A673 (cell line): ENCODE measurements at regions of chr11 and their contacts with region 1.

Region 1: GRCh38 chr11:122600290-122600689 is 55.2 kb upstream of the UBASH3B start:
- DNase-seq: no peak
- H3K4me3 ChIP-seq: no peak overlapping the region
- H3K27ac ChIP-seq: no peak overlapping the region
- H3K4me1 ChIP-seq: no peaks in the 10 kb centered on the region
- H3K27me3 ChIP-seq: no peaks in the 10 kb centered on the region
- CTCF ChIP-seq: no peak

Region 2: GRCh38 chr11:122655527-122656072 is 55.3 kb after region 1 on chr11 and contains the start of gene UBASH3B:
- CTCF ChIA-PET with region 1: interaction called, 12 read pairs
- POLR2A ChIA-PET with region 1: no interaction called
- intact Hi-C with region 1: no loop called
- DNase-seq: peak; percentile 91
- H3K4me3 ChIP-seq: peak within 1 kb of the TSS; percentile 95
- H3K27ac ChIP-seq: peak within 1 kb of the TSS; percentile 75
- H3K4me1 ChIP-seq: peaks cover 13% of the 10 kb centered on the region
- H3K27me3 ChIP-seq: no peaks in the 10 kb centered on the region
- CTCF ChIP-seq: 0 out of 2 replicates have a peak, but pooled peaks have one; percentile 19
- total RNA-seq, gene UBASH3B: 15.0 and 15.3 TPM in 2 replicates

Region 3: DNA sequence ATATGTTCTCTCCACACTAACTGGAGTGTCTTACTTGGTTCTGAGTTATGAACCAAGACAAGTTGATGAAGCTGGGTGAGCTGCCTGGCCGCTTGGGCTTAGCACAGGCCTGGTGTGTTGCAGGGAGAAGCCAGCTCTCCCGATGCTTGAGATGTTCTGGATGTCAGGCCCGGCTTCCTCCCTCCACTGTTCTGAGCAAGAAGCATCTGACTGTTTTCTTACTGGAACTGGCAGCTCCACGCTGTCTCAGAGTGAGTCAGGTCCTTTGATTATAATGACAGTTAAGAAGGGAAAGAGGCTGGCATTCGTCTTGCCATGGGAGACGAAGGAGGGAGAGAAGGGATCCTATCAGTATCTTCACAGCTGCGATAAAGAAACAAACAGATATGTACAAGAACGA is 191.5 kb after region 1 on chr11:
- CTCF ChIA-PET with region 1: no interaction called
- POLR2A ChIA-PET with region 1: no interaction called
- intact Hi-C with region 1: no loop called
- DNase-seq: no peak
- H3K4me3 ChIP-seq: no peak overlapping the region
- H3K27ac ChIP-seq: no peak overlapping the region
- H3K4me1 ChIP-seq: no peaks in the 10 kb centered on the region
- H3K27me3 ChIP-seq: no peaks in the 10 kb centered on the region
- CTCF ChIP-seq: no peak